Panc1 (cell line): ENCODE measurements at regions of chr1 and their contacts with region 1.

Region 1: DNA sequence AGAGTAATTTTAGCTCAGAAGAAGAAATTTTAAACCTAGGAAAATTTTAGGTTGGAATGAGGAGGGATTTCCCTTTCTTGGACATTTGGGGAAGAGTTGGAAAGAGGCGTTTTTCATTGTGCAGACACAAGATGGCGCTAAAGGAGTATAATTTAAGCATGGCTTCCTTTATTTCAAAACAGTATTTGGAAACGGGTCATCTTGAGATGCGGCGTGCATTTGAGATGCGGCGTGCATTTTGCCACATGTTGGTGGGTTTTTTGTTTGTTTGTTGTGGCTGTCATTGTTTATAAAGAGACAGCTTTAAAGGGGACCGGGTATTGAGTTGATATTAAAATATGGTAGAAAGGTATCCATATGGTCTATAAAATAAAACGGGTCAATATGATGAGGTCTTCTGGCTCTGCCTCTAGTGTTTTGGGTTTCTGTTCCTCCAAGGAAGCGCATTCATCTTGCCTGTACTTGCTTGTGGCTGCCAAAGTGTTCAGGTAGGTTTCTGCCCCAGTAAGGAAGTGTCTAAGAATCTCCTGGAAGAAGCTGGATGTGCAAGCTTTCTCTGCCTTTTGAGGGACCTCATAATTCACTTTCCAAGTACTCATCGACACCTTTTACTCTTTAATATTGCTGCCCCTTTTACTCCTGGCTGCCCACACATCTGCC is 210.3 kb downstream of the SLC35F3 start:
- DNase-seq: peak; percentile 35
- ATAC-seq: 0 out of 2 replicates have a peak, but pooled peaks have one; percentile 30
- H3K4me3 ChIP-seq: peak overlapping the region in 1 of 2 experiments; percentile 30; a peak in 2 of 4 replicates
- H3K27ac ChIP-seq: no peak overlapping the region
- H3K4me1 ChIP-seq: peaks cover 5% of the 10 kb centered on the region; the same call in 1 of the 2 replicates
- H3K27me3 ChIP-seq: no peaks in the 10 kb centered on the region
- CTCF ChIP-seq: peak; percentile 80

Region 2: DNA sequence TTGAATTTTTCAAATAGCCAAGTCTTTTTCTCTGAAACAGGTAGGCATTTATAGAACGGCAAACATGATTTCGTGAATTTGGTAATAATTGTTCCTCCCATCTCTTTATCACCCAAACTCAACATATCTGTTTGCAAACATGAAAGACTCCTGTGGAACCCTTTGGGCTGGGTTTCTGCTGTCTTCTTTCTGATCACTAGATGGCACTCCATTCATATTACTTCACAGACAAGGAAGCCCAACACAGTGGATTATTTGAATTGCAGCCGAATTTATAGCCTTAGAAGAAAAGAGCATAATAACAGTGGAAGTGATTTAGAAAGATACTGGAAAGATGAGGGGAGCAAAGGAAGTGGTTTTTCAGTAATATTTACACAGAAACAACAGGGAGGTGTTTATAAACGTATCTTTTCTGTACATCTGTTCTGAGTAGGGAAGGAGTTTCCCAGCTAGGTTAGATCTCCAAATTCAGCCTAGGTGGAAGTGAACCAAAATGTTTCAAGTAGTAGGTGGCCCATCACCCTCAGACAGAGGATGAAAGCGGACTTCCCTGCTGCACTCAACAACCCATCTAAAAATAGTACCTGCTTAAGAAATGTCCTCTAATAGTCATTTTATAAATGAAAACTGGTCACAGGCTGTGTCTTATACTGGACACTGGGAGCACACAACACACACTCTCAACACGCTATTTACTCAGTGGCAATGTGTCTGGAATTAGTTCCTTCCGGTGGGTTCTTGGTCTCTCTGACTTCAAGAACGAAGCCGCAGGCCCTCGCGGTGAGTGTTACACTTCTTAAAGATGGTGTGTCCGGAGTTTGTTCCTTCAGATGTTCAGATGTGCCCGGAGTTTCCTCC is 719.7 kb before region 1 on chr1:
- CTCF ChIA-PET with region 1: no interaction called
- POLR2A ChIA-PET with region 1: no interaction called
- in situ Hi-C with region 1: no loop called
- intact Hi-C with region 1: loop called (anchors 1 kb)
- DNase-seq: peak; percentile 51
- ATAC-seq: peak; percentile 95
- H3K4me3 ChIP-seq: no peak overlapping the region
- H3K27ac ChIP-seq: no peak overlapping the region
- H3K4me1 ChIP-seq: 0 out of 2 replicates have a peak, but pooled peaks cover 4% of the 10 kb centered on the region
- H3K27me3 ChIP-seq: no peaks in the 10 kb centered on the region
- CTCF ChIP-seq: peak; percentile 81; the same call in 1 of the 2 replicates

Region 3: GRCh38 chr1:233912909-233913308 is 201.9 kb before region 1 on chr1:
- CTCF ChIA-PET with region 1: no interaction called
- POLR2A ChIA-PET with region 1: no interaction called
- in situ Hi-C with region 1: no loop called
- intact Hi-C with region 1: loop called (anchors 5 kb)
- DNase-seq: no peak
- ATAC-seq: peak; percentile 48
- H3K4me3 ChIP-seq: no peak overlapping the region
- H3K27ac ChIP-seq: peak overlapping the region; percentile 97
- H3K4me1 ChIP-seq: peaks cover 83% of the 10 kb centered on the region
- H3K27me3 ChIP-seq: no peaks in the 10 kb centered on the region
- CTCF ChIP-seq: no peak

Region 4: DNA sequence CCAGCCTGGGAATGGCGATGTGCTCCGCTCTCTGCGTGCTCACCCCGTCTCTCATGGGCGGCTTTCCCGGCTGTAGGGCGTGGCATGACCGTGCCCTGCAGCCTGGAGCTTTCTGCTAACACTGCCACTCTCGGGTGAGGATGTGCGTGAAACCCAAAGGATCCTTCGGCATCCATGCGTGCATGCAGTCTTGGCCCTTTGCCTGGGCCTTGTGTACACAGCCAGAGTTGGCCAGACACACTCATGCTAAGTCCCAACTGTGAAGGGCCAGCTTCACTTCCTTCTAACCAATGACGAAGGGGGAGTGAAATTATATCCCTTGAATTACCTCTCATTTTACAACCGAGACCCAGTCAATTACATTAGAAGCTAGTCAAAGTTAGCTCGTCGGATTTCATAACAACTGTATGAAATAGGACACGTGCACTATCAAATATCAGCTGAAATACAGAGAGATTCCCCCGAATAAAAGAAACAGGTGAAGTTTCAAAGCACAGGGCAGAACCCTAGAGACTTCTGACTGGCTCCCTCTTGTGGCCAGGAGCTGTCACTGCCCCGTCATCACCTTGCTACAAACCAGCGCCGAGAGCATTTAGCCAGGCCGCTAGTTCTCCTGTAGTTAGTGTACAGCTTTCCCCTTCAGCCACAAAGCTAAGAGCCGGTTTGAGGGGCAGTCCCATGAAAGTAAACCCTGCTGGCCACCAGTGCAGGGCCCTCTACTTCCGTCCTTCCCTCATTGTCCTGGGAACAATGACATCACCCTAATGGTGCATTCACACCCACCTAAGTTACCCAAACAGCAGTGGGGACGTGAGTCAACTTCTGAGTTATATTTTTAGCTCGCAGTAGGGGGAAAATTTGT is 195.1 kb after region 1 on chr1:
- CTCF ChIA-PET with region 1: interaction called, 18 read pairs
- POLR2A ChIA-PET with region 1: no interaction called
- in situ Hi-C with region 1: no loop called
- intact Hi-C with region 1: loop called (anchors 2 kb)
- DNase-seq: peak; percentile 45
- ATAC-seq: peak; percentile 92
- H3K4me3 ChIP-seq: peak overlapping the region; percentile 12 to 14
- H3K27ac ChIP-seq: 0 out of 2 replicates have a peak overlapping the region, but pooled peaks have one; percentile 32
- H3K4me1 ChIP-seq: peaks cover 13% of the 10 kb centered on the region
- H3K27me3 ChIP-seq: no peaks in the 10 kb centered on the region
- CTCF ChIP-seq: peak; percentile 95

Region 5: DNA sequence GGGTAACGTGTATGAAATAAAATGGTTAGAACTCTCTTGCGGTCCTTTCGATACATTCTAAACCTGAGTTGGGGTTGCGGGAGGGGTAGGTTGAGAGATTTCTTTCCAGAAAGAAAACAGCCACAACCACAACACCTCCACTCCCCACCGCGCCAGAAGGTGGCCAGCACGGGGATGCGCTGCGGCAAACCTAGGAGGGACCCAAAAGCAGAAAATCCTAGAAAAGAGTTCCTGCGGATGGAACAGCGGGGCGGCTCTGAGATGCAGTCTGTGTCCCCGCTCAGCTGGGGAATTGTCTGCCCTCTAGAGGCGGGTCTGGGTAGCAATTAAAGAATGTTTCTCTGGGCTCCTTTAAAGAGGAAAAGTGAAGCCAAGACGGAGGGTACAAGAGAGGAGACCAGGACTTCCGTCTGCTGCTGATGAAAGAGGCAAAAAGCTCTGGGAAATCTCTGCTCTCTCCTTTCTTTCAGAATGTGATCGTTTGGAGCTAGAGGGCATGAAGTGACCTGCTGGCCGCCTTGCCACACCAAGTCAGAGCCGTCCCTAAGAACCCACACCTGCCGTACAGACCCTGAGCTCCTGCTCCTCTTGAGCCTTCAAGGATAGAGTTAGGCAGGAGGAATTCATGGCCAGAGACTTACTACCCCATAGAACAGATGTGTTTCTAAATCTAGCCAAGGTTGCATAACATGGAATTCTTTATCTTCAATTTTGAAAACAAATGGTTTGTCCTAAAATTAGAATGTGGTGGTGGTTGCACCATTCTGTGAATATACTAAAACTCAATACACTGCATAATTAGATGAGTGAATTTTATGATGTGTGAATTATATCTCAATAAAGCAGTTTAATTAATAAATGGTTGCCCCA is 212.0 kb after region 1 on chr1:
- CTCF ChIA-PET with region 1: no interaction called
- POLR2A ChIA-PET with region 1: no interaction called
- in situ Hi-C with region 1: no loop called
- intact Hi-C with region 1: loop called (anchors 5 kb)
- DNase-seq: no peak
- ATAC-seq: peak; percentile 93
- H3K4me3 ChIP-seq: peak overlapping the region; percentile 23 to 44; a peak in 3 of 4 replicates
- H3K27ac ChIP-seq: no peak overlapping the region
- H3K4me1 ChIP-seq: no peaks in the 10 kb centered on the region
- H3K27me3 ChIP-seq: no peaks in the 10 kb centered on the region
- CTCF ChIP-seq: peak; percentile 95